Activated B cell treated with CpG ODN at 0.5 μM for 24 hours (primary cell): ENCODE measurements at regions of chr19 and their contacts with region 1.

Region 1: GRCh38 chr19:35476149-35476548 is 14.1 kb downstream of the KRTDAP start:
- DNase-seq: no peak
- ATAC-seq: no peak
- H3K4me3 Mint-ChIP-seq: no peak overlapping the region
- H3K27ac Mint-ChIP-seq: no peak overlapping the region
- H3K4me1 Mint-ChIP-seq: no peaks in the 10 kb centered on the region
- H3K27me3 Mint-ChIP-seq: peaks cover 5% of the 10 kb centered on the region
- CTCF ChIP-seq: no peak

Region 2: DNA sequence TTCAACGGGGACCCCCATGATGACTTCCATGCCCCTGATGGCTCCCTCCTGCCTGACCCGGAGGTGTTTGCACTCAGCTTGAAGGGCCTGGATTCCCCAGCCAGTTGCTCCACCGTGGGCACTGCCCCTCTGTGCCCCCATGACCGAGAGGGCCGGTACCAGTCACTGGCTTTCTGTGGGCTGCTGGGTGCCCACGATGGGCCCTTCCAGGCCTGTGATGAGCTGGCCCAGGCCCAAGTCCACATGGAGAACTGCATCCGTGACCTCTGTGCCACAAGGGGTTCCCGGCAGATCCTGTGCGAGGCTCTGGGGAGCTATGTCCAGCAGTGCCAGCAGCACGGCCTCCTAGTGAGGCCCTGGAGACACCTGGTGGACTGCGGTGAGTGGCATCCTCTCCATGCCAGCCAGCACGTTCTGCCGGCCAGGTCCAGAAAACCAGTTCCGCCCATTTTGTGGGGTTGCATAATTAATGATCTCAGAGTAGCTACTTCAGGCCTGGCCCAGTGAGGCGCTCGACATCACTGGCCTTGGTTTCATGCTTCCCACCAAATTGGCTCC is 395.5 kb before region 1 on chr19:
- CTCF ChIA-PET with region 1: no interaction called
- POLR2A ChIA-PET with region 1: interaction called, 10 read pairs
- intact Hi-C with region 1: no loop called
- DNase-seq: no peak
- ATAC-seq: no peak
- H3K4me3 Mint-ChIP-seq: no peak overlapping the region
- H3K27ac Mint-ChIP-seq: no peak overlapping the region
- H3K4me1 Mint-ChIP-seq: peaks cover 72% of the 10 kb centered on the region
- H3K27me3 Mint-ChIP-seq: no peaks in the 10 kb centered on the region
- CTCF ChIP-seq: no peak

Region 3: GRCh38 chr19:35545001-35545911 is 69.1 kb after region 1 on chr19 and contains the start of gene TMEM147:
- CTCF ChIA-PET with region 1: no interaction called
- POLR2A ChIA-PET with region 1: no interaction called
- intact Hi-C with region 1: no loop called
- DNase-seq: peak; percentile 84
- ATAC-seq: peak; percentile 89
- H3K4me3 Mint-ChIP-seq: peak within 1 kb of the TSS; percentile 88
- H3K27ac Mint-ChIP-seq: peak within 1 kb of the TSS; percentile 79
- H3K4me1 Mint-ChIP-seq: peaks cover 44% of the 10 kb centered on the region
- H3K27me3 Mint-ChIP-seq: no peaks in the 10 kb centered on the region
- CTCF ChIP-seq: no peak
- total RNA-seq, gene TMEM147: 46.9 and 55.3 TPM in 2 replicates